ENCODE measurements at regions of chr3 and their contacts with region 1.

Region 1: DNA sequence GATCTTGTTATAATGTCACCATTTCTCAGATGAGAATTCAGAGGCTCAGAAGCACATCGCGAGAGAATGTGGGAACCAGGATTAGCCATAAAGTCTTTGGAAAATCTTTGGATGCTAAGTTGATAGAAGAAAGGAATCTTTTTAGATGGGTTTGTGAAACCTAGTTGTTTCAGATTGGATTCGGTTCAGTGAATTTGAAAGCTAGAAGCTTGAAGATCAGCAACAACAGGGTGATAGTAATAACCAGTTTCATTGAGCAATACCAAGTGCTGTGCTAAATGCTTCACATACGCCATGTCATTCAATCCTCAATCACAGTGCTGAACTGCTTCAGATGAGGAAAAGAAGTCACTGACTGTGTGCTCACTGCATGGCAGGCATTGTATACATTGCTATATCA is 47.4 kb upstream of the MITF start:
- DNase-seq: no peak
- ATAC-seq: peak; percentile 53

Region 2: GRCh38 chr3:69791919-69792399 is 100.1 kb after region 1 on chr3:
- intact Hi-C with region 1: loop called (anchors 10 kb)
- DNase-seq: no peak
- ATAC-seq: peak; percentile 87

Region 3: GRCh38 chr3:69948246-69948862 is 256.5 kb after region 1 on chr3:
- intact Hi-C with region 1: loop called (anchors 10 kb)
- DNase-seq: no peak
- ATAC-seq: no peak

Measured in sciatic nerve (tissue), 2 donors.